Heart left ventricle (tissue), 16 donors: ENCODE measurements at regions of chr6 and their contacts with region 1.

Region 1: GRCh38 chr6:89371849-89372505 is 19.5 kb upstream of the UBE2J1 start:
- DNase-seq: peak; percentile 74 to 86 (median 85)
- ATAC-seq: peak; percentile 71 to 92 (median 88)
- H3K4me3 ChIP-seq: no peak overlapping the region
- H3K27ac ChIP-seq: peak overlapping the region in 8 of 12 donors; percentile 1 to 71 (median 36)
- H3K4me1 ChIP-seq: peaks cover 0 to 28% (median 21%) of the 10 kb centered on the region in 12 donors
- H3K27me3 ChIP-seq: no peaks in the 10 kb centered on the region
- CTCF ChIP-seq: peak; percentile 88 to 98 (median 94)
- POLR2A ChIP-seq: no peak

Region 2: GRCh38 chr6:89145787-89146646 is 226.0 kb before region 1 on chr6 and contains the start of gene PM20D2:
- intact Hi-C with region 1: loop called in 1 of 10 experiments (anchors 10 kb)
- DNase-seq: peak; percentile 70 to 77 (median 74)
- ATAC-seq: peak; percentile 92 to 98 (median 95)
- H3K4me3 ChIP-seq: peak within 1 kb of the TSS; percentile 61 to 92 (median 85)
- H3K27ac ChIP-seq: peak within 1 kb of the TSS; percentile 82 to 98 (median 90)
- H3K4me1 ChIP-seq: peaks cover 0 to 25% (median 7%) of the 10 kb centered on the region in 12 donors
- H3K27me3 ChIP-seq: no peaks in the 10 kb centered on the region
- CTCF ChIP-seq: no peak
- POLR2A ChIP-seq: peak; percentile 2 to 64
- total RNA-seq, gene PM20D2: 6.0 to 22.9 (median 10.4) TPM

Region 3: GRCh38 chr6:89311853-89312531 is 60.0 kb before region 1 on chr6:
- intact Hi-C with region 1: loop called (anchors 2 to 5 kb)
- DNase-seq: peak; percentile 62 to 78 (median 68)
- ATAC-seq: peak; percentile 52 to 79 (median 74)
- H3K4me3 ChIP-seq: peak overlapping the region in 5 of 12 donors; percentile 18 to 37 (median 31)
- H3K27ac ChIP-seq: peak overlapping the region in 11 of 12 donors; percentile 55 to 79 (median 70)
- H3K4me1 ChIP-seq: peaks cover 7 to 41% (median 25%) of the 10 kb centered on the region in 12 donors
- H3K27me3 ChIP-seq: no peaks in the 10 kb centered on the region
- CTCF ChIP-seq: peak in 11 of 12 donors; percentile 41 to 73 (median 56)
- POLR2A ChIP-seq: no peak

Region 4: DNA sequence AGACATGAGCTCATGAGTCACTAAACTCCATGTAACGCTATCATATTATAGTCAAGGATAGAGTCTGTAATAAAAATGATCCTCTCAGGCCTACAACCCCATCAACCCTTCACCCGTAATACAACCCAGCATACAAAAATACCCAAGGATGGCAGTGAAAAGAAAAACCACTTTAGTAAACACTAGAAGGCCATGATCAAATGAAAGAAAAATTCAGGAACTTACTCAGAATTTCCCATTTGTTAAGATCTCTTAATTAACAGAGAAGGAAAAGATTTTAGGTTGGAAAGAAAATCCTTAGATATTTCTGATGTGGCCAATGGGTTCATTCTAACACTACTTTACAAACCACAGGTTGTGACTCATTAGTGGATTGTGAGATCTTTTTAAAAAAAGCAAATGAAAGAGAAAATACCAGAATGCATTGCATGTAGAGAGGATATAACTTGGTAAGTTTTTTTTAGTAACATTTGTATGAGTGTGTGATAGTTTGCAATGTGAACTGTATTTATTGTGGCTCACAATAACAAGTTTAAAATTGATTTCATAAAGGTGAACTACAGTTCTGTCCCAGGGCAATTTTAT is 11.5 kb before region 1 on chr6:
- intact Hi-C with region 1: no loop called
- DNase-seq: no peak
- ATAC-seq: no peak
- H3K4me3 ChIP-seq: no peak overlapping the region
- H3K27ac ChIP-seq: no peak overlapping the region
- H3K4me1 ChIP-seq: peaks cover 0 to 30% (median 3%) of the 10 kb centered on the region in 12 donors
- H3K27me3 ChIP-seq: no peaks in the 10 kb centered on the region
- CTCF ChIP-seq: no peak
- POLR2A ChIP-seq: no peak

Region 5: GRCh38 chr6:89412071-89413005 is 40.4 kb after region 1 on chr6 and contains the start of gene RRAGD:
- intact Hi-C with region 1: loop called in 5 of 10 experiments (anchors 2 to 5 kb)
- DNase-seq: peak; percentile 75 to 84 (median 82)
- ATAC-seq: peak; percentile 72 to 94 (median 88)
- H3K4me3 ChIP-seq: peak within 1 kb of the TSS; percentile 69 to 96 (median 84)
- H3K27ac ChIP-seq: peak within 1 kb of the TSS; percentile 79 to 94 (median 91)
- H3K4me1 ChIP-seq: peaks cover 0 to 45% (median 16%) of the 10 kb centered on the region in 12 donors
- H3K27me3 ChIP-seq: no peaks in the 10 kb centered on the region
- CTCF ChIP-seq: peak in 1 of 12 donors; percentile 11
- POLR2A ChIP-seq: peak in 1 of 2 donors; percentile 42
- total RNA-seq, gene RRAGD: 69.7 to 147 (median 102) TPM